PC-9 (cell line): ENCODE measurements at regions of chr6 and their contacts with region 1.

Region 1: DNA sequence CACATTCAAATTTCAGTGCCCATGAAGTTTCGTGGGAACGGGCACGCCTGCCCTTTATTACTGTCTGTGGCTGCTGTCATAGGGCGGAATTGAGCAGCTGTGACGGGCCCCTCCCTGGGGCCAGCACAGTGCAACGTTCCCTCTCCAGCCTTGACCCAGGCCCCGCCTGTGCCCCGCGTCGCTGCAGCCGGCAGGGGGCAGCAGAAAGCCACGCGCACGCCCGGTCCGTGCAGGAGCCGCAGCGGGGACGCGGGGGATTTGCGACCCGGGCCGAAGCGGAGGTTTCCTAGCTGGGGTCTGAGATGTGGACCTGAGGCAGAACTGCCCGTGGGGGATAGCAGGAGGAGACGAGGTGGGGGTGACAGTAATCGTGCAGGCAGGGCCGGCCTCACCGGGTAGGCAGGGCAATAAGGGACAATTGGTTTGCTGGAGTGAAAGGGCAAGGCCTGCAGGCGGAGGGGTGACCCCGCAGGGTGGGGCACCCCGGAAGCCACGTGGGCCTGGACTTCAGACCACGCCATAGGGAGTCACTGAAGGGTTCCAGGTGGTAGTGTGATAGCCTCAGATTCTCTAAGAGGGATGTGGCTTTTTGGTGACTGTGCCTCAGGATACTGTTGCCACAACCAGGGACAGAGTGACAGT is 54.4 kb downstream of the SYTL3 start:
- DNase-seq: peak; percentile 81 to 88
- H3K4me3 ChIP-seq: peak overlapping the region; percentile 46; the same call in 1 of the 2 replicates
- H3K27ac ChIP-seq: peak overlapping the region; percentile 94
- H3K4me1 ChIP-seq: peaks cover 54% of the 10 kb centered on the region
- H3K27me3 ChIP-seq: no peaks in the 10 kb centered on the region
- CTCF ChIP-seq: peak; percentile 98

Region 2: DNA sequence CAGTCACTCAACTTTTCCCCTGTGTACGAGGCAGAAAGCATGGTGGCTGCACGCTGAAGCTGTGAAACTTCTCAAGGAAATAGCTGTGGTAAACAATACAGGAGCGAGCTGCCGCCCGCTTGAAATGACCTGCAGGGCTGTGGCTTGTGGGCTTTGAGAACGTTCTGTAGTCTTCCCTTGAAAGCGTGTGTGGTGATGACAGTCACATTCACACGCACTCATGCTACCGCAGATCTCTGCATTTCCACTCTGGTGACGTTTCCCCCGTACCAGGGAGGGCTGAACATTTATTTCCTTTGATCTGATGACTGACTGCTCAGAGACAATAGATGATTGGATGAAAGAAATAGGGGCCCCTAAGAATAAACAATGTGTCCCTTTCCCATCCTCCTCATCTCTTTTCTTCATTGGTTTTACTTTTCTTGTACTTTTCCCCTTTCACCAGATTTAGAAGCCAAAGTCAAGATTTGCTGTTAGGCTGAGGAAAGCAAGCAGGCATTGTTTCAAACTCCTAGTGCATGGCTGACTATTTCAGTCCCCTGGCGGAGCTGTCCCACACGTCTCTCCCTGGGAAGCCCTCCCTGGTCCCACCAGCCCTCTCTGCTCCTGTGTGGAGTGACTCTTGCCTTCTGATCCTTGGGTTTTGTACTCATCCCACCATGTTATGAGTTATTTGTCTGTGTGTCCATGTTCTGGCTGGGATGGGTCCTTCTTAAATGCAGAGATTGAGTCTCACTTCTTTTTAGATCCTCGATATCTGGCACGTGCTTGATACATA is 50.5 kb before region 1 on chr6:
- CTCF ChIA-PET with region 1: no interaction called
- POLR2A ChIA-PET with region 1: no interaction called
- intact Hi-C with region 1: no loop called
- DNase-seq: no peak
- H3K4me3 ChIP-seq: no peak overlapping the region
- H3K27ac ChIP-seq: peak overlapping the region; percentile 77
- H3K4me1 ChIP-seq: peaks cover 53% of the 10 kb centered on the region
- H3K27me3 ChIP-seq: no peaks in the 10 kb centered on the region
- CTCF ChIP-seq: no peak

Region 3: GRCh38 chr6:158729914-158730907 is 25.9 kb after region 1 on chr6:
- CTCF ChIA-PET with region 1: no interaction called
- POLR2A ChIA-PET with region 1: no interaction called
- intact Hi-C with region 1: loop called (anchors 2 kb)
- DNase-seq: peak; percentile 46 to 100
- H3K4me3 ChIP-seq: peak overlapping the region; percentile 31
- H3K27ac ChIP-seq: peak overlapping the region; percentile 100
- H3K4me1 ChIP-seq: peaks cover 22% of the 10 kb centered on the region
- H3K27me3 ChIP-seq: no peaks in the 10 kb centered on the region
- CTCF ChIP-seq: 0 out of 2 replicates have a peak, but pooled peaks have one; percentile 42

Region 4: DNA sequence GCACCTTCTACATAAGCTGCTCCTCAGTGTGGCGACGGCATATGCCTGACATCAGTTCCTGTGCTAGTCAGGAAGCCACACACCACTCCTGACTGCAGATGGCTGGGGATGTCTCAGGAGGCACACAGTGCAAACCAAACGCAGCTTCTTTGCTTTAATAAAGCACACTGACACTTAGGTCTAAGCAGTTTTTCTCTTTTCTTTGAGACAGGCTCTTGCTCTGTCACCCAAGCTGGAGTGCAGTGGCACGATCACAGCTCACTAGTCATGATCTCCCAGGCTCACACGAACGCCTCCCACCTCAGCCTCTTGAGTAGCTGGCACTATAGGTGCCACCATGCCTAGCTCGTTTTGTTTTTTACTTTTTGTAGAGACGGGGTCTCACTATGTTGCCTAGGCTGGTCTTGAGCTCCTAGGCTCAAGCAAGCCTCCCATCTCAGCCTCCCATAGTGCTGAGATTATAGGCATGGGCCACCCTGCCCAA is 85.2 kb after region 1 on chr6:
- CTCF ChIA-PET with region 1: no interaction called
- POLR2A ChIA-PET with region 1: no interaction called
- intact Hi-C with region 1: loop called (anchors 5 kb)
- DNase-seq: no peak
- H3K4me3 ChIP-seq: no peak overlapping the region
- H3K27ac ChIP-seq: peak overlapping the region; percentile 48
- H3K4me1 ChIP-seq: peaks cover 94% of the 10 kb centered on the region
- H3K27me3 ChIP-seq: no peaks in the 10 kb centered on the region
- CTCF ChIP-seq: no peak

Region 5: DNA sequence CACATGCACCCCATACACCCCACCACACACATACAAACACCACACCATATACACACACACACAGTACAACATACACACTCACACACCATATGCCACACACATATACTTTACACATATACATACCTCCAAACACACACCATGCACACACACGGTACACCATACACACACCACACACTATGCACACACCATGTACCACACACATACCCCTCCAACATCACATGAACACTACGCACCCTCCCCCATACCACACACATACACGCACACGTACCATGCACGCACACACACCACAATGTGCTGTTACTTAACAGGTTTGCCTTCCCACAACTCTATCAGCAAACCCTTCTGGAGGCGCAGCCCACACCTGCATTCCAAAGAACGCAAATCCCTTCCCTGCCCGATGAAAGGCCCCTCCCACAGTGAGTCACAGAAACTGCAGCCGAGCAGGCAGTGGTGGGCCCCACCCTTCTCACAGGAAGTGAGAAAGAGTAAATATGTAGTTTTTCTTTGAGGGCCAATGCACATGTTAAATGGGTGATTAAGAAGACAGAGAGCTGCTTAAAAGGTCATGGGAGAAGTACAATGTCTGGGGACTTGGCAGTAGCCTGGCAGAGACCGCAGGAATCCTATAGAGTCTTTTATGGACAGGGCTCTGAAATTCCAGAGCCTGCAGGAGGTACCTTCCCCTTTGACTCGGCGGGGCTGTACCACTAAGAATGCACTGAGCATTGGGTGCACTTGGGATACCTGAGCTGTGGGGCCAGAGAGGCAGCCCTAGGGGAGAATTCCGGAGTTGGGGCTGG is 149.0 kb after region 1 on chr6:
- CTCF ChIA-PET with region 1: no interaction called
- POLR2A ChIA-PET with region 1: interaction called, 5 read pairs
- intact Hi-C with region 1: loop called (anchors 1 kb)
- DNase-seq: peak; percentile 92 to 100
- H3K4me3 ChIP-seq: peak overlapping the region; percentile 51
- H3K27ac ChIP-seq: peak overlapping the region; percentile 99
- H3K4me1 ChIP-seq: peaks cover 93% of the 10 kb centered on the region
- H3K27me3 ChIP-seq: no peaks in the 10 kb centered on the region
- CTCF ChIP-seq: no peak

Region 6: GRCh38 chr6:158972241-158973233 is 268.2 kb after region 1 on chr6:
- CTCF ChIA-PET with region 1: no interaction called
- POLR2A ChIA-PET with region 1: no interaction called
- intact Hi-C with region 1: loop called (anchors 1 kb)
- DNase-seq: peak; percentile 4 to 60
- H3K4me3 ChIP-seq: no peak overlapping the region
- H3K27ac ChIP-seq: peak overlapping the region; percentile 42
- H3K4me1 ChIP-seq: peaks cover 6% of the 10 kb centered on the region
- H3K27me3 ChIP-seq: no peaks in the 10 kb centered on the region
- CTCF ChIP-seq: peak; percentile 82

Region 7: DNA sequence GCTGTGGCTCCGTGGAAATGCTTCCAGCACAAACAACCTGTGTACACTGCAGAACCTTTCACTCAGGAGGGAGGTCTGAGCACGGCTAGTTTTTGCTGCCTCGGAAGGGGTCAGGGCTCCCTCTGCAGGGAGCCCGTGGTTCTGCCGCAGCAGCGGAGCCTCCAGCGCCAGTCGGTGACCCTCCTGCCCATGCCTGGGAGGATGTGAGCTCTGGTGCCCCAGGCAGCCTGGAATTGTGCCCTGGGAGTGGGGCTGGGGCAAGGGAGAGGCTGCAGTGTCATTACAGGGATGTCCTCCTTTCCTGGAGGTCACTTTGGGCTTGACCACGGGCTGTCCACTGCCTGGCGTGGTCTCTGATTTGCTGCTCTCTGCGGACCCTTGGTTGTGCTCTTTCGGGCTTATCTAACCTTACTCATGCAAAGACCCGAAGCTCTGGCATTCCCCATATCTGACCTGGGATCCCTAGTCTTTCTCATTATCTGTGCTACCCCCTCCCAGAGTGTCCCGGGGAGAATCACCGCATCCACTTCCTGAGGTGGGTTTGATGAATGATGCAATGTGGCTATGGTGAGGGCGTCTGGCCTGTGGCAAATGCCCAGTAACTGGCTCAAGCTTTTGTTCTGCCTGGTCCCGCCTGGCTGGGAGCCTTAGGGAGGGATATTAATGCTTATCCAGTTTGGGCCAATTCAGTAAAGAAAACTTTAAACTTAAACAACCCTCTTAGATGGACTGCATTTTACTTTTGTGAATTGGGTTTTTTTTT is 400.0 kb after region 1 on chr6:
- CTCF ChIA-PET with region 1: no interaction called
- POLR2A ChIA-PET with region 1: no interaction called
- intact Hi-C with region 1: loop called (anchors 10 kb)
- DNase-seq: peak in 1 of 2 experiments; percentile 56
- H3K4me3 ChIP-seq: no peak overlapping the region
- H3K27ac ChIP-seq: no peak overlapping the region
- H3K4me1 ChIP-seq: no peaks in the 10 kb centered on the region
- H3K27me3 ChIP-seq: no peaks in the 10 kb centered on the region
- CTCF ChIP-seq: peak; percentile 86

Region 8: DNA sequence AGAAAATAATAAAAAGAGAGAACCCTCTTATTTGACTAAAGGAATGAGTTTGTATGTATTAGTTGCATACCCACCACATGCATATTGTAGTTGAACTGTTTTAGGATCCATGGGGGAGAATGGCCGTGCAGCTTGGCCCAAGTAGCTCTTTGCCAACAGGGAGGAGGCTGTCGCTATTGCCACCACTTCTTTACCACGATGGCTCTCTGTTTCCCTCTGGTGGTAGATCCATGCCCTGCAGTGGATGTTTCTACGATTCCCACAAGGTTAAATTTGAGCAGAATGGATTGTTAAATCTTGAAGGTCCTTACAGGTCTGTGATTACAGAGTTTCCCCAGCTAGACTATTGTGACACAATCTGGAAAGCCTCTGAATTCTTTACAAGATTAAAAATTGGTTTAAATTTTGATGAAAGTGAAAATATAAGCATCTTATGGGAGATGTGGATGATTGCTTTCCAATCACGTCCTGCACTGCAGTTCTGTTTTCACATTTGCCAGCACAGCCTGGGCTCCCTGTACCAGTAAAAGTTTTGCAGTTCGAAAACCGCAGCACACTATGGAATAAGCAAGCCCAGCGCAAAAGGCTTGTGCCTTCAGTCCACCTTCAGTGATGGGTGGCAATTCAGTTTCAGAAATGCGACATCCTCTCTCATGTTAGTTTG is 430.5 kb after region 1 on chr6:
- CTCF ChIA-PET with region 1: no interaction called
- POLR2A ChIA-PET with region 1: no interaction called
- intact Hi-C with region 1: loop called (anchors 1 kb)
- DNase-seq: peak; percentile 49 to 54
- H3K4me3 ChIP-seq: no peak overlapping the region
- H3K27ac ChIP-seq: no peak overlapping the region
- H3K4me1 ChIP-seq: no peaks in the 10 kb centered on the region
- H3K27me3 ChIP-seq: peaks cover 9% of the 10 kb centered on the region
- CTCF ChIP-seq: peak; percentile 94